ENCODE measurements at regions of chr18 and their contacts with region 1.

Region 1: DNA sequence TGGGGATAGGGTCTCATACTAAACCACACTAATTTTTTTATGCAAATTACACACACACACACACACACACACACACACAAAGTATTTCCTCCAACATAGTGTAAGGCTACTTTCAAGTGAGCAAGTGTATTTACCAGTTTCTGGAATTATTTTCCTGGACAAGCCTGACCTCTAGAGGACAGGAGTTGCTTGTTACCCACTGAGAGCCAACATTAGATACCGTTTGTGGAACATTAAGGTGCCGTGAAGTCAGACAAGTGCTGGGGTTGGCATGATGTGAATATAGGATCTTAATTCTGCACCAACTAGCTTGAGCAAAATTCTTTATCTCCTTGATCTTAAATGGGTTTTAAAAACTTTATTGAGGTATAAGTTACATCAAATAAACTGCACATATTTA is 39.3 kb upstream of the SERPINB2 start:
- DNase-seq: peak; percentile 39
- ATAC-seq: peak; percentile 82
- H3K4me3 ChIP-seq: no peak overlapping the region
- H3K27ac ChIP-seq: no peak overlapping the region
- H3K4me1 ChIP-seq: no peaks in the 10 kb centered on the region
- H3K27me3 ChIP-seq: no peaks in the 10 kb centered on the region
- CTCF ChIP-seq: peak; percentile 62
- EP300 ChIP-seq: no peak
- POLR2A ChIP-seq: no peak
- RAD21 ChIP-seq: no peak

Region 2: GRCh38 chr18:63523660-63524059 is 324.5 kb before region 1 on chr18:
- CTCF ChIA-PET with region 1: interaction called, 7 read pairs
- POLR2A ChIA-PET with region 1: no interaction called
- in situ Hi-C with region 1: loop called (anchors 5 kb)
- intact Hi-C with region 1: loop called (anchors 1 kb)
- DNase-seq: no peak
- ATAC-seq: no peak
- H3K4me3 ChIP-seq: no peak overlapping the region
- H3K27ac ChIP-seq: no peak overlapping the region
- H3K4me1 ChIP-seq: no peaks in the 10 kb centered on the region
- H3K27me3 ChIP-seq: no peaks in the 10 kb centered on the region
- CTCF ChIP-seq: no peak
- EP300 ChIP-seq: no peak
- POLR2A ChIP-seq: no peak
- RAD21 ChIP-seq: no peak

Region 3: GRCh38 chr18:63762518-63762917 is 85.6 kb before region 1 on chr18:
- CTCF ChIA-PET with region 1: no interaction called
- POLR2A ChIA-PET with region 1: no interaction called
- in situ Hi-C with region 1: no loop called
- intact Hi-C with region 1: no loop called
- DNase-seq: no peak
- ATAC-seq: no peak
- H3K4me3 ChIP-seq: no peak overlapping the region
- H3K27ac ChIP-seq: no peak overlapping the region
- H3K4me1 ChIP-seq: no peaks in the 10 kb centered on the region
- H3K27me3 ChIP-seq: no peaks in the 10 kb centered on the region
- CTCF ChIP-seq: no peak
- EP300 ChIP-seq: no peak
- POLR2A ChIP-seq: no peak
- RAD21 ChIP-seq: no peak

Region 4: DNA sequence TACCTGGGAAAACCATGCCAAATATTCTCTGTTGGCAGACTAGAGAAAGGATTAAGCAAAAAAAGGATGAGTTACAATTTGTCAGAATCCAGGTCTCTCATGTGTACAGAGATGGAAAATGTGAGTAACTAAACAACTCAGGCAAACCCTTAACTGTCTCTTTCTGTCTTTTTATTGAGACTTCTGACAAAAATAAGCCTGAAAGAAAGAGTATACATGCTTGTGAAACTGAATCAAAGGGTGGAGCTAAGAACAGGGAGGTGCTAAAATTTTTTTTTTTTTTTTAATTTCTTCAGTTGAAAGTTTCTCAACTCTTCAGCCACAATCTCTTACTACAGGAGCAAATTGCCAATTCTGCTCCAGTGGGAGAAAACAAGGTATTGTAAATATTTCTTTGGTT is 59.5 kb after region 1 on chr18 and contains the start of gene SERPINB10:
- CTCF ChIA-PET with region 1: no interaction called
- POLR2A ChIA-PET with region 1: no interaction called
- in situ Hi-C with region 1: no loop called
- intact Hi-C with region 1: no loop called
- DNase-seq: no peak
- ATAC-seq: no peak
- H3K4me3 ChIP-seq: no peak within 1 kb of the TSS
- H3K27ac ChIP-seq: no peak within 1 kb of the TSS
- H3K4me1 ChIP-seq: no peaks in the 10 kb centered on the region
- H3K27me3 ChIP-seq: no peaks in the 10 kb centered on the region
- CTCF ChIP-seq: no peak
- EP300 ChIP-seq: no peak
- POLR2A ChIP-seq: no peak
- RAD21 ChIP-seq: no peak
- total RNA-seq, gene SERPINB10: not detected in 2 replicates

Measured in HepG2 (cell line).